GM12878 (cell line): ENCODE measurements at regions of chr4 and their contacts with region 1.

Region 1: GRCh38 chr4:79185526-79186045 is 140.3 kb downstream of the NAA11 start:
- DNase-seq: no peak
- ATAC-seq: no peak
- H3K4me3 ChIP-seq: no peak overlapping the region
- H3K27ac ChIP-seq: no peak overlapping the region
- H3K4me1 ChIP-seq: no peaks in the 10 kb centered on the region
- H3K27me3 ChIP-seq: no peaks in the 10 kb centered on the region
- CTCF ChIP-seq: no peak
- EP300 ChIP-seq: no peak
- POLR2A ChIP-seq: no peak
- RAD21 ChIP-seq: no peak

Region 2: DNA sequence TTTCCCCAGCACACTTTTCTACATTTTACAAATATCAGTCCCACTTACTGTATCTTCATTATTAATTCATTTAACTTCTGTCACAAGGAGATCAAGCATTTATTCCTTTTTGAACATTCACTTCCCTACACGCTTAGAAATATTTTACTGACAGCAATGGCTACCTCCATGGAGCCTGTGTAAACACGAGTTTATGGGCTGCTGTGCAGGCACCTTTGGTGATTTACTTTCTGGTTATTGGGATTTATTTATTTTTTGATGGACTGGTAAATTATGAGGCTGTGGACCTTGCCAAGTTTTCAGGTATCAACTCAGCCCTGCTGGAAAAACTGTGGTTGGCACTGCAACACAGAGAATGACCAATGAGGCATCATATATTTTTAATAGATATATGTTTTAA is 201.0 kb before region 1 on chr4:
- CTCF ChIA-PET with region 1: no interaction called
- POLR2A ChIA-PET with region 1: no interaction called
- RAD21 ChIA-PET with region 1: no interaction called
- SMC1A ChIA-PET with region 1: no interaction called
- in situ Hi-C with region 1: no loop called
- intact Hi-C with region 1: no loop called
- DNase-seq: no peak
- ATAC-seq: no peak
- H3K4me3 ChIP-seq: no peak overlapping the region
- H3K27ac ChIP-seq: no peak overlapping the region
- H3K4me1 ChIP-seq: no peaks in the 10 kb centered on the region
- H3K27me3 ChIP-seq: 0 out of 4 replicates have a peak, but pooled peaks cover 0 to 2% of the 10 kb centered on the region in 2 experiments
- CTCF ChIP-seq: no peak
- EP300 ChIP-seq: no peak
- POLR2A ChIP-seq: no peak
- RAD21 ChIP-seq: no peak

Region 3: GRCh38 chr4:79197275-79198009 is 11.9 kb after region 1 on chr4:
- CTCF ChIA-PET with region 1: interaction called, 3 read pairs
- POLR2A ChIA-PET with region 1: no interaction called
- RAD21 ChIA-PET with region 1: no interaction called
- SMC1A ChIA-PET with region 1: interaction called, 10 read pairs
- in situ Hi-C with region 1: no loop called
- intact Hi-C with region 1: no loop called
- DNase-seq: no peak
- ATAC-seq: no peak
- H3K4me3 ChIP-seq: no peak overlapping the region
- H3K27ac ChIP-seq: no peak overlapping the region
- H3K4me1 ChIP-seq: no peaks in the 10 kb centered on the region
- H3K27me3 ChIP-seq: no peaks in the 10 kb centered on the region
- CTCF ChIP-seq: no peak
- EP300 ChIP-seq: no peak
- POLR2A ChIP-seq: no peak
- RAD21 ChIP-seq: no peak

Region 4: DNA sequence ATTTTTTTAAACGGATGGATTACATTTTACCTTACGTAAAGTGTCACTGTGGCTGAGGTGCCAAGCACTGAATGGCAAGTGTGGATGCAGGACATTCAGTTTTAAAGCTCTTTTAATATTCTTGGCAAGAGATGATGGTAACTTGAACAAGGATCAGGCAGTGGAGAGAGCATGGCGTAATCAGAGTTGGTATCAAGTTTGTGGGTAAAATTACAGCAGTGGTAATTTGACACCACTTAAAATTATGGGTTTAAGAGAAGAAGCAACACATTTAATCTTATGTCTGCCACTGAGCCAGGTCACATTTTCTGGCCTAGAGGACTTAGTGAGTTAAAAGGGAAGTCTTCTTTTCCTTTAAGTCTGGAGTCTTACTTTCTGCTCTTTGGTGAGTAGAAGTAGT is 39.8 kb after region 1 on chr4:
- CTCF ChIA-PET with region 1: no interaction called
- POLR2A ChIA-PET with region 1: interaction called, 3 read pairs
- RAD21 ChIA-PET with region 1: interaction called, 6 read pairs
- SMC1A ChIA-PET with region 1: interaction called, 11 read pairs
- in situ Hi-C with region 1: no loop called
- intact Hi-C with region 1: no loop called
- DNase-seq: no peak
- ATAC-seq: peak; percentile 12; the same call in 2 of the 3 replicates
- H3K4me3 ChIP-seq: no peak overlapping the region
- H3K27ac ChIP-seq: no peak overlapping the region
- H3K4me1 ChIP-seq: no peaks in the 10 kb centered on the region
- H3K27me3 ChIP-seq: no peaks in the 10 kb centered on the region
- CTCF ChIP-seq: no peak
- EP300 ChIP-seq: no peak
- POLR2A ChIP-seq: no peak
- RAD21 ChIP-seq: no peak